CD4-positive, alpha-beta T cell (primary cell): ENCODE measurements at regions of chr1 and their contacts with region 1.

Region 1: GRCh38 chr1:161225534-161226319 is at the start of gene TOMM40L:
- DNase-seq: peak; percentile 74 to 98 (median 82)
- ATAC-seq: peak; percentile 95
- H3K4me3 ChIP-seq: peak within 1 kb of the TSS; percentile 84
- H3K4me3 Mint-ChIP-seq: peak within 1 kb of the TSS; percentile 98
- H3K27ac ChIP-seq: peak within 1 kb of the TSS; percentile 5 to 52
- H3K27ac Mint-ChIP-seq: peak within 1 kb of the TSS; percentile 83
- H3K4me1 ChIP-seq: peaks cover 34% of the 10 kb centered on the region
- H3K4me1 Mint-ChIP-seq: peaks cover 39% of the 10 kb centered on the region
- H3K27me3 ChIP-seq: no peaks in the 10 kb centered on the region
- H3K27me3 Mint-ChIP-seq: no peaks in the 10 kb centered on the region
- CTCF ChIP-seq: peak; percentile 59
- total RNA-seq, gene TOMM40L: 3.2 to 4.1 TPM

Region 2: GRCh38 chr1:161165742-161166668 is 59.7 kb before region 1 on chr1 and contains the start of gene PPOX:
- CTCF ChIA-PET with region 1: interaction called, 28 read pairs
- POLR2A ChIA-PET with region 1: interaction called, 30 read pairs
- intact Hi-C with region 1: no loop called
- DNase-seq: peak; percentile 85 to 97 (median 88)
- ATAC-seq: peak; percentile 90
- H3K4me3 ChIP-seq: peak within 1 kb of the TSS; percentile 95
- H3K4me3 Mint-ChIP-seq: peak within 1 kb of the TSS; percentile 93
- H3K27ac ChIP-seq: peak within 1 kb of the TSS; percentile 85 to 86
- H3K27ac Mint-ChIP-seq: peak within 1 kb of the TSS; percentile 98
- H3K4me1 ChIP-seq: peaks cover 43% of the 10 kb centered on the region
- H3K4me1 Mint-ChIP-seq: peaks cover 66% of the 10 kb centered on the region
- H3K27me3 ChIP-seq: no peaks in the 10 kb centered on the region
- H3K27me3 Mint-ChIP-seq: no peaks in the 10 kb centered on the region
- CTCF ChIP-seq: peak; percentile 61
- total RNA-seq, gene PPOX: 28.6 to 31.5 TPM

Region 3: DNA sequence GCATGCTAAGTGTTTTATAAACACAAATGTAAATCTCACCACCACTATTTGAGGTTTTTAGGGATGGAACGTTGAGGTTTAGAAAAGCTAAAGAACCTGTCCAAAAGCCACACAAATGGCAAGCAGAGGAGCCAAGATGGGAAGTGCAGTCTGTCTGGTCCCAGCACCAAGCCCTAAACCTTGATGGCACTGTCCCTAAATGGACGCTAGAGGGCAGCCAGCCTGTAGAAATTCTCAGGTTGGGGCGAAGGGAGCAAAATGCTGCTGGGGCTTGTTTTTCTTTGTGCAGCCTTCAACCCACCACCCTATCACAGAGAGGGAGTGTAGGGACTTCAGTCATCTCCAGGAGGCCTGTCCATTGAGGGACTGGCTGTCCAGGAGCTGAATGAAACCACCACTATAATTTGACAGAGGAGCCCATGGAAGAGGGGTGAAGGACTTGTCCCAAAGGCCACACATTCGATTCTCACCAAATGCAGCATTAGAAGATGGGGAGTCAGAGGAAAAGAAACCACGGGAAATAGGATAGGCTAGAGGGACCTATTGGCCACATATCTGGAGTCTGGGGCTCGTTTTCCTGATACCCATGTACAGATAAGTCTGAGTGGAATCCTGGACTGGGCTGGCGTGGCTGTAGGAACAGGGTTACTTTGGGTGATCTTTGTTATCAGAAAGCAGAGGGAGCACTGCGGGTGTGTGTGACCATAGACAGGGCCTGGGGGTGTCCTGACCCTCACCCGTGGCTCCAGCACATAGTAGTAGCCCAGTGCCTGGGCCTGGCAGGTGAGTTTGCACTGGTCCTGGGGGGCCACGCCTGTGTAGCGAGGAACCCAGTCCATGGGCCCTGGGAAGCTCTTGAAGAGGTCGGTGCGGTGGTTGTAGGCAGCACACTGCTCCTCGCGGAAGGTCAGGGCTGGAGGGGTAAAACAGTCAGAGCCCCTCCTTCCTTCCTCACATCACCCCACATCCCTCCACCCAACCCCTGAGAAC is 33.0 kb before region 1 on chr1:
- CTCF ChIA-PET with region 1: interaction called, 8 read pairs
- POLR2A ChIA-PET with region 1: interaction called, 15 read pairs
- intact Hi-C with region 1: loop called in 1 of 2 experiments (anchors 2 kb)
- DNase-seq: peak; percentile 49 to 87 (median 66)
- ATAC-seq: peak; percentile 98
- H3K4me3 ChIP-seq: no peak overlapping the region
- H3K4me3 Mint-ChIP-seq: peak overlapping the region; percentile 1
- H3K27ac ChIP-seq: no peak overlapping the region
- H3K27ac Mint-ChIP-seq: peak overlapping the region; percentile 14
- H3K4me1 ChIP-seq: peaks cover 72% of the 10 kb centered on the region
- H3K4me1 Mint-ChIP-seq: peaks cover 44% of the 10 kb centered on the region
- H3K27me3 ChIP-seq: no peaks in the 10 kb centered on the region
- H3K27me3 Mint-ChIP-seq: no peaks in the 10 kb centered on the region
- CTCF ChIP-seq: peak; percentile 80

Region 4: DNA sequence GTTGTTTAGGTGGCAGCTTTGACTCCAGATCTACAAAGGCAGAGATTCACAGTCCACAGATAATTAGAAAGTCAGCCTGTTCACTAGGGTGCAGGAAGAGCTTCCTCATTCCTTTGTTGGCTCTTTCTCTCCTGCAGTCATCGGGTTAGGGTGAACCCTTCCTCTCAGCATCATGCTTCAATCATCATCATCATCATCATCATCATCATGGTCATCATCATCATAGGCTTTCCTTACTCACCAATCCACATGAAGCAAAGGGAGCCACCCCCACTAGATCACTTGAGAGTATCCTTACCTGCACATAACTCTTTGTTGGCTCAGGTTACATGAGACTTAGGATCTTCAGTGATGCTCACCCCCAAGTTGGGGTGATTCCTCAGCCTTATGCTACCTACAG is 65.1 kb after region 1 on chr1:
- CTCF ChIA-PET with region 1: interaction called, 8 read pairs
- POLR2A ChIA-PET with region 1: interaction called, 4 read pairs
- intact Hi-C with region 1: loop called (anchors 1 to 2 kb)
- DNase-seq: no peak
- ATAC-seq: no peak
- H3K4me3 ChIP-seq: no peak overlapping the region
- H3K4me3 Mint-ChIP-seq: no peak overlapping the region
- H3K27ac ChIP-seq: no peak overlapping the region
- H3K27ac Mint-ChIP-seq: no peak overlapping the region
- H3K4me1 ChIP-seq: no peaks in the 10 kb centered on the region
- H3K4me1 Mint-ChIP-seq: peaks cover 5% of the 10 kb centered on the region
- H3K27me3 ChIP-seq: no peaks in the 10 kb centered on the region
- H3K27me3 Mint-ChIP-seq: no peaks in the 10 kb centered on the region
- CTCF ChIP-seq: no peak

Region 5: DNA sequence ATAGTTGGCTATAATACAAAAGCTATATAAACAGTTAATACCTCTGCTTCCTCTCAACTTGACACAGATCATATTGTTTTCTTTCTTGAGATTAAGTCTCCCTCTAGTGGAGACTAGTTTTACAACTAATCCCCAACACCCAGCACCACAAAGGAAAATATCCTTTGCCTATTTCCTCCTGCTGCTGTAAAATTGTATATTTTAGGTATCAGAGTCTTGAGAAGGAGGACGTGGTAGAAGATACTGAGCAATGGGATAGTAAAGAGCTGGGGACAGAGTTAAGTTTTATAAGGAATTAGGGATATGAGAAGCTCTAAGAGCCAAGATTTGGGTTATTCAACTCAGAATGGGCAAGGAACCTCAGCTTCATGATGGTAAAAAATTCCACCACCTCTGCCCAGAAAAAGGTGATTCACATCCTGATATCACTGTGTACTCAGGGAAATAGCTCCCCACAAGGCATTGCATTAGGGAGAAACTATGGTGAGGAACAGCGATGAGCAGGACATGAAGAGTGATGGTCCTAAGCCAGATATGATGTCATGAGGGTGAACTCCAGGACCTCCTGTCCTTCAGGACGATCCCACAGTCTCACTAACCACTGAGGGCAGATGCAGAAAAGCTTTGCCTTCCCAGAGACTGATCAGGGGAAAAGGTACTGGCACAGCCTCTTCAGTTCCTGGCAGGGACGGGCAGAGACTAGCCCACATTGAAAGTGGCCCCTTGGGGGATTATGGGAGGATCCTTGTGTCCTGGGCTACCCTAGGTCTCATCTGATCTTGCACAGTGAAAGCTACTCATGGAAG is 156.7 kb after region 1 on chr1:
- CTCF ChIA-PET with region 1: interaction called, 21 read pairs
- POLR2A ChIA-PET with region 1: interaction called, 15 read pairs
- intact Hi-C with region 1: loop called (anchors 1 to 2 kb)
- DNase-seq: peak in 3 of 14 experiments; percentile 69 to 72 (median 70)
- ATAC-seq: peak; percentile 83
- H3K4me3 ChIP-seq: no peak overlapping the region
- H3K4me3 Mint-ChIP-seq: no peak overlapping the region
- H3K27ac ChIP-seq: no peak overlapping the region
- H3K27ac Mint-ChIP-seq: no peak overlapping the region
- H3K4me1 ChIP-seq: peaks cover 6% of the 10 kb centered on the region
- H3K4me1 Mint-ChIP-seq: peaks cover 11% of the 10 kb centered on the region
- H3K27me3 ChIP-seq: no peaks in the 10 kb centered on the region
- H3K27me3 Mint-ChIP-seq: no peaks in the 10 kb centered on the region
- CTCF ChIP-seq: peak; percentile 79